H1 (cell line): ENCODE measurements at regions of chr11 and their contacts with region 1.

Region 1: DNA sequence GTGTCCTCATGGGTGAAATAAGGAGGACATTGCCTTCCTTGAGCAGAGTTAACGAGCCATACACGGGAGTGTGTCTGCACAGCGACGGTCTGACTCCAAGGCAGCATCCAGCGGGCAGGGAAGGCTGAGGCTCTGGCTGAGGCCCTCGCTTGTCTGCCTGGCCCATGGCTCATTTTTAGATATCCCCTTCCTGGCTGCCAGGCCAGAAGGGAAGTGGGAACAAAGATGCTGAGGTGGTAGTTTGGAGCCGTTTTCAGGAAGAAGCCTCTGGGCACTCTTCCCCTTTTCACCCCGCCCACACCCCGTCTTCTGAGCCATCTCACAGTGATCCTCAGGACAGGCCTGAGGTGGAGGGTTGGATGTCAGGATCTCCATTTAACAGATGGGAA is 3.0 kb upstream of the SLCO2B1 start:
- DNase-seq: no peak
- H3K4me3 ChIP-seq: no peak overlapping the region
- H3K27ac ChIP-seq: no peak overlapping the region
- H3K4me1 ChIP-seq: no peaks in the 10 kb centered on the region
- H3K27me3 ChIP-seq: no peaks in the 10 kb centered on the region; a peak in 1 of 7 replicates
- CTCF ChIP-seq: no peak
- EP300 ChIP-seq: no peak
- POLR2A ChIP-seq: no peak
- RAD21 ChIP-seq: no peak

Region 2: DNA sequence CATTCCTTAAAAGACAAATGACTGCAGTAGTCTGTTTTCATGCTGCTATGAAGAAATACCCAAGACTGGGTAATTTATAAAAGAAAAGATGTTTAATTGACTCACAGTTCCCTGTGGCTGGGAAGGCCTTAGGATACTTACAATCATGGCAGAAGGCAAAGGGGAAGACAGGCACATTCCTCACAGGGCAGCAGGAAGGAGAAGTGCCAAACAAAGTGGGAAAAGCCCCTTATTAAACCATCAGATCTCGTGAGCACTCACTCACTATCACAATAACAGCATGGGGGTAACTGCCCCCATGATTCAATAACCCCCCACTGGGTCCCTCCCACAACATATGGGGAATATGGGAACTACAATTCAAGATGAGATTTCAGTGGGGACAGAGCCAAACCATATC is 34.8 kb before region 1 on chr11:
- CTCF ChIA-PET with region 1: no interaction called
- POLR2A ChIA-PET with region 1: no interaction called
- DNase-seq: no peak
- H3K4me3 ChIP-seq: no peak overlapping the region
- H3K27ac ChIP-seq: no peak overlapping the region
- H3K4me1 ChIP-seq: no peaks in the 10 kb centered on the region
- H3K27me3 ChIP-seq: no peaks in the 10 kb centered on the region
- CTCF ChIP-seq: no peak
- EP300 ChIP-seq: no peak
- POLR2A ChIP-seq: no peak
- RAD21 ChIP-seq: no peak

Region 3: DNA sequence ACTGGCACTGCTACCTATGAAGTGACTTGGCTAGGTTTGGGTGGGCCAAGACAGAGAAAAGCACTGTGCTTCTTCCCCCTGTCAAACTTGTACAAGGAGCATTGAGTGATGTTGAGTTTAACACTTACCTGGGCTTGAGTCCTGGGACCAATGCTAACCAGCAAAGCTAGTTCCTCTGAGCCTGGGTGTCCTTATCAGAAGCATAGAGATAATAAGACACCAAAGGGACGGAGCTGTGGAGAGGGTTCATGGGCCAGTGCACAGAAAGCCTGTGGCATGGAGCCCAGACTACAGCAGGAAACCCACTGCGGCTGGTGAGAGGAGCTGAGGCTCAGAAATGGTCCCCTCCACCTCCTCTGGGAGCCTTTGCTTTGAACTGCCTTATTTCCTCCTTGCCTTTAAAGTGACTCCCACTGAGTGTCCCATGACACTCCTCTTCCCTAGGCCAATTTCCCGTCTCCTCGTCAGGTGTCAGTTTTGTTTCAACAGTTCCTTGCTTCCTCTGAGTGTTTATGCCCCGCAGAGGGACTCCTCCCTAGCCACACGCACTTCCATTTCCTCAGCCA is 12.4 kb after region 1 on chr11:
- CTCF ChIA-PET with region 1: interaction called, 189 read pairs
- POLR2A ChIA-PET with region 1: no interaction called
- DNase-seq: no peak
- H3K4me3 ChIP-seq: no peak overlapping the region
- H3K27ac ChIP-seq: no peak overlapping the region
- H3K4me1 ChIP-seq: no peaks in the 10 kb centered on the region; a peak in 1 of 7 replicates
- H3K27me3 ChIP-seq: no peaks in the 10 kb centered on the region
- CTCF ChIP-seq: no peak
- EP300 ChIP-seq: no peak
- POLR2A ChIP-seq: no peak
- RAD21 ChIP-seq: no peak

Region 4: DNA sequence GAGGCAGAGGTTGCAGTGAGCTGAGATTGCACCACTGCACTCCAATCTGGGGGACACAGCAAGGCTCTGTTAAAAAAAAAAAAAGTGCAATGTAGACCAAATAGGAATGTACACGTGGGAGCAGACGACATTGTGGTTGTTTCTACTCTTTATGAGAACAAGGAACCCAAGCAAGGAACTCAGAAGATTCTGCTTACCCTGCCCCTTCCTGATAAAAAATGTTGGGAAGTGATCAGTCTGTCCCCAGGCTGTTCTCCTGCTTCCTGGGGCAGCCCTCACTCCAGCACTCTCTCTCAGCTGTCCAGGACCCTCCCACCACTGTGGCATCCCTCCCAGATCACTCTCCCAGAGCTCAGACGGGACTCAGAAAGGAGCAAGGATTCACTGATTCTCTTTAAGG is 34.8 kb after region 1 on chr11:
- CTCF ChIA-PET with region 1: interaction called, 23 read pairs
- POLR2A ChIA-PET with region 1: no interaction called
- DNase-seq: no peak
- H3K4me3 ChIP-seq: no peak overlapping the region
- H3K27ac ChIP-seq: no peak overlapping the region
- H3K4me1 ChIP-seq: peaks cover 0 to 2% (median 0%) of the 10 kb centered on the region in 4 experiments; a peak in 1 of 7 replicates
- H3K27me3 ChIP-seq: no peaks in the 10 kb centered on the region
- CTCF ChIP-seq: no peak
- EP300 ChIP-seq: no peak
- POLR2A ChIP-seq: no peak
- RAD21 ChIP-seq: no peak

Region 5: GRCh38 chr11:75214411-75214821 is 66.5 kb after region 1 on chr11:
- CTCF ChIA-PET with region 1: interaction called, 952 read pairs
- POLR2A ChIA-PET with region 1: no interaction called
- DNase-seq: peak; percentile 70 to 94
- H3K4me3 ChIP-seq: no peak overlapping the region
- H3K27ac ChIP-seq: no peak overlapping the region
- H3K4me1 ChIP-seq: no peaks in the 10 kb centered on the region
- H3K27me3 ChIP-seq: no peaks in the 10 kb centered on the region; a peak in 2 of 7 replicates
- CTCF ChIP-seq: peak; percentile 45 to 78 (median 70)
- EP300 ChIP-seq: no peak
- POLR2A ChIP-seq: no peak
- RAD21 ChIP-seq: peak; percentile 59 to 68

Region 6: DNA sequence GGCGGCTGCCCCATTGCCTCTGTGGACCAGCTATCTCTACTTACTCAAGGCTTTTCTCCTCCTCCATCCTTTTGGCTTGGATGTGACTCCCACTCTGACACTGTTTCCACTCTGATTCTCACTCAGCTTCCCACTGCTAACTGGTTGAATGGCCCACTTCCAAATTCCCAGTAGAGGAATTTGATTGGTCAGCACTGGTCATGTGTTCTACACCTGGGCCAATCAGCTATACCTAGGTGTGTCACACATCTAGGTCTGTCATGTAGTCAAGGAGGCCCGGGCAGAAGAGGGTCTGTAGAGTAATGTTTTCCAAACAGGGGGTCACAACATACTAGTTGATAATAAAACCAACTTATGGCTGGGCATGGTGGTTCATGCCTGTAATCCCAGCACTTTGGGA is 146.0 kb after region 1 on chr11:
- CTCF ChIA-PET with region 1: no interaction called
- POLR2A ChIA-PET with region 1: no interaction called
- DNase-seq: no peak
- H3K4me3 ChIP-seq: no peak overlapping the region
- H3K27ac ChIP-seq: no peak overlapping the region
- H3K4me1 ChIP-seq: no peaks in the 10 kb centered on the region
- H3K27me3 ChIP-seq: no peaks in the 10 kb centered on the region
- CTCF ChIP-seq: no peak
- EP300 ChIP-seq: no peak
- POLR2A ChIP-seq: no peak
- RAD21 ChIP-seq: no peak

Region 7: DNA sequence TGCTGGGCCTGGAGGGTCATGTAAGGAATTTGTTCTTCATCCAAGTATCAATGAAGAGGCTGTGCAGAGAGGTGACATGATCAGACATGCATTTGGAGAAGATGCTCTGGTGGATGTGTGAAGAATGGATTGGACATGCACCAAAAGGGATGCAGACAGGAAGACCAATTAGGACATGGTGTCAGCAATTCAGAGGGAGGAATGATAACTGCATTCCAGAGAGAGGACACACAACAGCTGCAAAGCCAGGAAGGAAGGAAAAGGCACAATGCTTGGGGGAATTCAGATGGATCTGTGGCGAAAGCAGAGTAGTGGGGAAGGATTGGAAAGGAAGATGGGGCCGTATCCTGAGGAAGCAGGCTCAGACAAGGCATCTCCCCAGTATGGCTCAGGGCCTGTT is 208.7 kb after region 1 on chr11:
- CTCF ChIA-PET with region 1: no interaction called
- POLR2A ChIA-PET with region 1: no interaction called
- DNase-seq: no peak
- H3K4me3 ChIP-seq: no peak overlapping the region
- H3K27ac ChIP-seq: no peak overlapping the region
- H3K4me1 ChIP-seq: peaks cover 0 to 7% (median under 1%) of the 10 kb centered on the region in 4 experiments; a peak in 4 of 7 replicates
- H3K27me3 ChIP-seq: no peaks in the 10 kb centered on the region; a peak in 1 of 7 replicates
- CTCF ChIP-seq: no peak
- EP300 ChIP-seq: no peak
- POLR2A ChIP-seq: no peak
- RAD21 ChIP-seq: no peak

Region 8: DNA sequence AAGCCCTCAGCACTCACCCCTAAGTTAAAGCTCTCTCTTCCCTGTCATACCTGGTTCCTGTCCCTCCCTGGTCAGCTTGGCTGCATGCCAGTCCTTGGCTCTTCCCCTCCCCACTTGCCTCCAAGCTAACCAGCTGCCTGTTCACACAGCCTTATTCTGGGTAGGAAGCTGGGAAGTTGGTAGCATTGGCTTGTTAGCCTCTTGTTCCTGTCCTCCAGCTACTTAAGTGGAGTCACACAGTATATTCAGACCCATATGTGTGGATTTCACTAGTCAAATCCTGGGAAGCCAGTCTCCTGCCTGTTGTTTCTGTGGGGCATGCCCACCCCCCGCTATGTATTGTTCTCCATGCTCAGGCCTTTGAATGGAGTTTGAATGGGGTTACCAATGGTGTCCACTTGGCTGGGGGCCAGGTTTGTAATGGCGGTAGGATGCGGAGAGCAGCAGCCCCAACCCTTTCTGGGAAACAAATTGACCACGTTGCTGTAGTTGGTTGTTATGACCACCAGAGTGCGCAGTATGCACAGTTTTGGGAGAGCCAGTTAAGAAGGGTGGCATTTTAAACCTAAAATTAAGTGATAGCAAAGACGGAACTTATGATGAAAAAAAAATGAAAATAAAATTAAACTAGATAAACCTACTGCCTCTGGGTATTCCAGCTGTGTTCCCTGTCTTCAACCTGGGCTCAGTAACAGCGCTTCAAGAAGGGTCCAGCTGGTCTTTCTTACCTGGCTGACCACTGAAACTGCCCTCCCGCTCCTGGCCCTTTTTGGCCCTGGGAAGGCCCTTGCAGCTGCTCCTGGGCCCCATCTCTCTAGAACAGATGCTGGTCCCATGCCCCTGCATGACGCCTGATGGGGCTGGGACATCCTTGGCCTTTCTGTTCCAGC is 240.8 kb after region 1 on chr11:
- CTCF ChIA-PET with region 1: no interaction called
- POLR2A ChIA-PET with region 1: no interaction called
- DNase-seq: peak; percentile 33 to 77
- H3K4me3 ChIP-seq: 0 out of 8 replicates have a peak overlapping the region, but pooled peaks of 1 of the 4 experiments have one; percentile 1
- H3K27ac ChIP-seq: no peak overlapping the region
- H3K4me1 ChIP-seq: peaks cover 0 to 3% (median 0%) of the 10 kb centered on the region in 4 experiments; a peak in 3 of 7 replicates
- H3K27me3 ChIP-seq: no peaks in the 10 kb centered on the region
- CTCF ChIP-seq: peak; percentile 56 to 79 (median 78)
- EP300 ChIP-seq: no peak
- POLR2A ChIP-seq: no peak
- RAD21 ChIP-seq: peak; percentile 84 to 85